ENCODE measurements at regions of chr11 and their contacts with region 1.

Region 1: GRCh38 chr11:45102810-45103621 is 43.4 kb upstream of the PRDM11 start:
- DNase-seq: peak; percentile 75
- ATAC-seq: peak; percentile 100
- H3K4me3 Mint-ChIP-seq: peak overlapping the region; percentile 76
- H3K27ac Mint-ChIP-seq: peak overlapping the region; percentile 82
- H3K4me1 Mint-ChIP-seq: peaks cover 11% of the 10 kb centered on the region
- H3K27me3 Mint-ChIP-seq: peaks cover 16% of the 10 kb centered on the region

Region 2: DNA sequence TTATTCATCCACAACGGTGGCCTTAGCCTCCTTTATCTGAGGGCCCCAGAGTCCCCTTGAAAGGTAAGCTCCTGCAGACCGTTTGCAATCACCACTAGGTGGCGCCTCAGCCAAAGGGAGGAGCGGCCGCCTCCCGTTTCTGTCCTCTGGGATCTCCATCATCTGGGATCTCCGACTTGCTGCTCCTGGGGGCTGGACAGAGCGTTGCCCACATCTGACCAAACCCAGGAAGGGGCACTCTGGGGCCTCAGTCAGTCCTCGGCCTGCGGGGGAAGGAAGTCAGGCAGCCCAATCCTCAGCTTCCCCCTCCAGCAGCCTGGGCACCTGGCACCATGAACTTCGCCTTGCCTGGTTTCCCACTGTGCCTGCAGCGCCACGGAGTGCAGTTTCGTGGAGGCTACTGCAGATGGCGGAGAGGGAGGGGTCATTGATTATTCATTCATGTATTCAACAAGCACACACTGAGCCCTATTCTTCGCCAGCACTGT is 175.8 kb before region 1 on chr11:
- POLR2A ChIA-PET with region 1: interaction called, 11 read pairs
- DNase-seq: peak; percentile 70
- ATAC-seq: peak; percentile 57
- H3K4me3 Mint-ChIP-seq: no peak overlapping the region
- H3K27ac Mint-ChIP-seq: no peak overlapping the region
- H3K4me1 Mint-ChIP-seq: peaks cover 2% of the 10 kb centered on the region
- H3K27me3 Mint-ChIP-seq: no peaks in the 10 kb centered on the region

Region 3: DNA sequence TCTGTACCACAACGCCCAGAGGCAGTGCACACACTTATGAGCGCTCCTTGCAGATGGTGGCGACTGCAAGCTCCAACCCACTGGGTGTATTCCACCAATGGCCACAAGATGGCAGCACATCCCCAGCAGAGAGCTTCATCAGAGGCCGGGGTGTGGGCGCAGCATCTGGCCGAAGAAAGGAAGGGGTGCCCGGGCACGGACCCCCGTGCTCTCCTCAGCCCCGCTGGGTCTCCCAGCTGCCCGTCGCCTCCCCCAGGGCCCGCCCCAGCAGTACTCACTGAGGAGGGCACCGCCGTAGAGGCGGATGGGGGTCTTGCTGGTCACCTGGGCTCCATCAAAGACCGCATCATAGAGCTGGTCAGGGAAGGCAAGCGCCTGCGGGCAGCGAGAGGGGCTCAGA is 166.5 kb before region 1 on chr11:
- POLR2A ChIA-PET with region 1: interaction called, 29 read pairs
- DNase-seq: peak; percentile 85
- ATAC-seq: peak; percentile 79
- H3K4me3 Mint-ChIP-seq: no peak overlapping the region
- H3K27ac Mint-ChIP-seq: no peak overlapping the region
- H3K4me1 Mint-ChIP-seq: no peaks in the 10 kb centered on the region
- H3K27me3 Mint-ChIP-seq: no peaks in the 10 kb centered on the region

Measured in activated naive CD8-positive, alpha-beta T cell treated with anti-CD3 and anti-CD28 coated beads, Interleukin-2, amount 10 ng/mL, durations not matched to agents 7 days and 5 days (primary cell).